Activated CD4-positive, alpha-beta T cell treated with anti-CD3 and anti-CD28 coated beads for 36 hours (primary cell): ENCODE measurements at regions of chr9 and their contacts with region 1.

Region 1: GRCh38 chr9:73683862-73684591 is 532.4 kb downstream of the ANXA1 start:
- DNase-seq: no peak
- ATAC-seq: no peak
- H3K4me3 Mint-ChIP-seq: no peak overlapping the region
- H3K27ac Mint-ChIP-seq: no peak overlapping the region
- H3K4me1 Mint-ChIP-seq: no peaks in the 10 kb centered on the region
- H3K27me3 Mint-ChIP-seq: no peaks in the 10 kb centered on the region

Region 2: GRCh38 chr9:74379718-74380117 is 695.7 kb after region 1 on chr9:
- CTCF ChIA-PET with region 1: no interaction called
- POLR2A ChIA-PET with region 1: no interaction called
- intact Hi-C with region 1: loop called in 1 of 2 experiments (anchors 2 kb)
- DNase-seq: peak; percentile 40
- ATAC-seq: no peak
- H3K4me3 Mint-ChIP-seq: no peak overlapping the region
- H3K27ac Mint-ChIP-seq: no peak overlapping the region
- H3K4me1 Mint-ChIP-seq: no peaks in the 10 kb centered on the region
- H3K27me3 Mint-ChIP-seq: no peaks in the 10 kb centered on the region

Region 3: DNA sequence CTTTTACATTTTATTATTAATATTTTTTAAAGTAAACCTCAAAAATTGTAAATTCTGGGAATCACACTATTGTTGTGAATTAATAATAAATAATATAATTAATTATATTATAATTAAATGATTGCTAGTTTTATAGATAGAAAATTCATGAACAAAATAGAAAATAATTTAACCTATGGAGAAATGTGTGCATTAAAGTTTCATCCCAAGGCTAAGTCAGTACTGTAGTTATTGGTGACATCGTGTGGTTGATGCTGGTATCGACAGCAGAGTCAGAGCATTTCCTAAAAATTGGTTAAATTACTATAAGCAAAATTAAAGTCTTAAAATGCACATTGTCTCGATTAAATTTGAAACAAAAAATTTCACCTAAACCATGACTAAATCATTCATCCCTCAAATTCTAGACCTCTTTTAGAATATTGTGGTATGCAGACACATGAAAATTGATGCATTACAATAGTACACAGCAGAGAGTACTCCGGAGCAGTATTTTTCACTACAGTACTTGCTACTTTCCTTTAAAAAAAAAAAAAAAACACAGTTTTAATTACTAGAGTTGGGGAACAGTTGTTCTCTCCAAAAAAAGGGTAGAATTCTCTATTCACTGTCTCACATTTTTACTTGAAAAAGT is 887.0 kb after region 1 on chr9:
- CTCF ChIA-PET with region 1: no interaction called
- POLR2A ChIA-PET with region 1: no interaction called
- intact Hi-C with region 1: loop called (anchors 2 to 5 kb)
- DNase-seq: peak; percentile 33
- ATAC-seq: no peak
- H3K4me3 Mint-ChIP-seq: no peak overlapping the region
- H3K27ac Mint-ChIP-seq: no peak overlapping the region
- H3K4me1 Mint-ChIP-seq: no peaks in the 10 kb centered on the region
- H3K27me3 Mint-ChIP-seq: no peaks in the 10 kb centered on the region

Region 4: GRCh38 chr9:74645007-74645639 is 961.1 kb after region 1 on chr9:
- CTCF ChIA-PET with region 1: no interaction called
- POLR2A ChIA-PET with region 1: no interaction called
- intact Hi-C with region 1: loop called in 1 of 2 experiments (anchors 10 kb)
- DNase-seq: no peak
- ATAC-seq: no peak
- H3K4me3 Mint-ChIP-seq: no peak overlapping the region
- H3K27ac Mint-ChIP-seq: no peak overlapping the region
- H3K4me1 Mint-ChIP-seq: no peaks in the 10 kb centered on the region
- H3K27me3 Mint-ChIP-seq: peaks cover 2% of the 10 kb centered on the region

Region 5: GRCh38 chr9:74742792-74743730 is 1059.0 kb after region 1 on chr9:
- CTCF ChIA-PET with region 1: no interaction called
- POLR2A ChIA-PET with region 1: no interaction called
- intact Hi-C with region 1: loop called in 1 of 2 experiments (anchors 5 kb)
- DNase-seq: peak; percentile 32
- ATAC-seq: no peak
- H3K4me3 Mint-ChIP-seq: no peak overlapping the region
- H3K27ac Mint-ChIP-seq: no peak overlapping the region
- H3K4me1 Mint-ChIP-seq: no peaks in the 10 kb centered on the region
- H3K27me3 Mint-ChIP-seq: peaks cover 27% of the 10 kb centered on the region